ENCODE measurements at regions of chr16 and their contacts with region 1.

Region 1: GRCh38 chr16:53346-54236 is at the starts of genes POLR3K and SNRNP25:
- DNase-seq: peak; percentile 84
- ATAC-seq: peak; percentile 98
- H3K4me3 ChIP-seq: peak within 1 kb of the TSS; percentile 93
- H3K27ac ChIP-seq: peak within 1 kb of the TSS; percentile 87
- H3K4me1 ChIP-seq: no peaks in the 10 kb centered on the region
- H3K27me3 ChIP-seq: no peaks in the 10 kb centered on the region
- CTCF ChIP-seq: no peak
- EP300 ChIP-seq: no peak
- POLR2A ChIP-seq: peak; percentile 95
- RAD21 ChIP-seq: no peak
- polyA plus RNA-seq, gene POLR3K: 195 to 222 TPM
- polyA plus RNA-seq, gene SNRNP25: 40.9 to 59.8 TPM

Region 2: DNA sequence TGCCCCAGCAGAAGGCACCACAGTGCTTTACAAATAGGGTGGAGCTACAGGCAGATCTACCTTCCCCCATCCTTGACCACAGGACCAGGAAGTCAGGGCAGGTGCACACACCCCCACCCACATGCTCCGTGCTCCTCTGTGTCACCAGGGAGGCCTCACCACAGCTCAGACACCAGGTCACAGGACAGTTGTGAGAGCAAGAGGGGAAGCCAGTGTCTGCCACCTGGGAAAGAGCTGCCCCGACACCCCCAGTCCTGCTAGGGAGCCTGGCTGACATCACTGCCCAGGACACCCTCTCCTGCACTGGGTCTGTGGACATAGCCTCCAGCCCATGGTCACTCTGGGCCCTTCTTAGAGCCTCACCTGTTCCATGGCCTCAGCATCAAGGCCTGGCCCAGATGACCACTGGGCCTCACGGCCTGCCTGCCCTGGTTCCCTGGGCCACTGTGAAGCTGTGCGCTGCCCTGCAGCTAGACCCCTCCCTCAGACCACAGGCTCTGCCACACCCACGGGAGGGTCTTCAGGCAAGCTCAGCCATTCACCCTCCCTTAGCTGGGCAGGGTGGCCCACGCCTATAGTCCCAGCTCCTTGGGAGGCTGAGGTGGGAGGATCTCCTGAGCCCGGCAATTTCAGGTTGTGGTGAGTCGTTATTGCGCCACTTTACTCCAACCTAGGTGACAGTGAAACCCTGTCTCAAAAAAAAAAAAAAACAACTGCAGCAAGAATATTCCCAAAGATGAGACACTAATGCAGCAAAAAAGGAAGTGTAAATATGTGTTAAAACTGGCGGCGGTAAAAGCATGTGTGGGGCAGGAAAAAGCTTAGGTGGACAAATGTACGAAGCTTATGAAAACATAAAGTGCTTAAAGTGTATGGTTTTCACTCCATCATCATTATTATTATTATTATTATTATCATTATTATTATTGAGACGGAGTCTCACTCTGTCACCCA is 14.4 kb before region 1 on chr16:
- CTCF ChIA-PET with region 1: interaction called, 14 read pairs
- POLR2A ChIA-PET with region 1: interaction called, 18 read pairs
- RAD21 ChIA-PET with region 1: interaction called, 22 read pairs
- SMC1A ChIA-PET with region 1: interaction called, 10 read pairs
- in situ Hi-C with region 1: no loop called
- intact Hi-C with region 1: no loop called
- DNase-seq: peak; percentile 79
- ATAC-seq: peak; percentile 91
- H3K4me3 ChIP-seq: no peak overlapping the region
- H3K27ac ChIP-seq: peak overlapping the region; percentile 75
- H3K4me1 ChIP-seq: peaks cover 34% of the 10 kb centered on the region
- H3K27me3 ChIP-seq: no peaks in the 10 kb centered on the region
- CTCF ChIP-seq: no peak
- EP300 ChIP-seq: peak; percentile 35 to 76; a peak in 3 of 4 replicates
- POLR2A ChIP-seq: peak; percentile 82
- RAD21 ChIP-seq: no peak

Region 3: DNA sequence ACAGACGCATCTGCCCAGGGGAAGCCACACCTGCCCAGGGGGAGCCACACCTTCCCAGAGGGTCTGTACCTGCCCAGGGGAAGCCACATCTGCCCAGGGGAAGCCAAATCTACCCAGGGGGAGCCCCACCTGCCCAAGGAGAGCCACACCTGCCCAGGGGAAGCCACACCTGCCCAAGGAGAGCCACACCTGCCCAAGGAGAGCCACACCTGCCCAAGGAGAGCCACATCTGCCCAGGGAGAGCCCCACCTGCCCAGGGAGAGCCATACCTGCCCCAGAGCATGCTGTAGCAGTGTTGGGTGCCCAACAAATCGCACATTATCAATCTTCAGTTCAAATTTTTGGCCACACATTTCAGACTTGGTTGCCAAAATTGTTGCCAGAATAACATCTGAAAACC is 65.3 kb after region 1 on chr16:
- CTCF ChIA-PET with region 1: no interaction called
- POLR2A ChIA-PET with region 1: no interaction called
- RAD21 ChIA-PET with region 1: no interaction called
- SMC1A ChIA-PET with region 1: no interaction called
- in situ Hi-C with region 1: no loop called
- intact Hi-C with region 1: no loop called
- DNase-seq: no peak
- ATAC-seq: no peak
- H3K4me3 ChIP-seq: no peak overlapping the region
- H3K27ac ChIP-seq: no peak overlapping the region
- H3K4me1 ChIP-seq: no peaks in the 10 kb centered on the region
- H3K27me3 ChIP-seq: no peaks in the 10 kb centered on the region
- CTCF ChIP-seq: no peak
- EP300 ChIP-seq: no peak
- POLR2A ChIP-seq: no peak
- RAD21 ChIP-seq: no peak